Activated T-helper 2 cell treated with anti-CD3 and anti-CD28 coated beads, Interferon-gamma antibody, Interleukin-2, Interleukin-4, amounts not matched to agents 10 μg/mL and 5 μg/mL and 100 μg/mL, durations not matched to agents 14 hours and 24 hours and 36 hours (primary cell): ENCODE measurements at regions of chr11 and their contacts with region 1.

Region 1: GRCh38 chr11:6481012-6481923 is at the starts of genes ARFIP2 and TIMM10B:
- DNase-seq: peak; percentile 97
- H3K4me3 Mint-ChIP-seq: peak within 1 kb of the TSS; percentile 88
- H3K27ac Mint-ChIP-seq: peak within 1 kb of the TSS; percentile 93
- H3K4me1 Mint-ChIP-seq: peaks cover 25% of the 10 kb centered on the region
- H3K27me3 Mint-ChIP-seq: no peaks in the 10 kb centered on the region
- total RNA-seq, gene ARFIP2: 46.8 and 48.6 TPM in 2 replicates
- total RNA-seq, gene TIMM10B: 42.9 and 43.0 TPM in 2 replicates

Region 2: GRCh38 chr11:6505577-6506240 is 24.4 kb after region 1 on chr11:
- intact Hi-C with region 1: loop called (anchors 2 kb)
- DNase-seq: no peak
- H3K4me3 Mint-ChIP-seq: no peak overlapping the region
- H3K27ac Mint-ChIP-seq: no peak overlapping the region
- H3K4me1 Mint-ChIP-seq: peaks cover 3% of the 10 kb centered on the region
- H3K27me3 Mint-ChIP-seq: no peaks in the 10 kb centered on the region

Region 3: DNA sequence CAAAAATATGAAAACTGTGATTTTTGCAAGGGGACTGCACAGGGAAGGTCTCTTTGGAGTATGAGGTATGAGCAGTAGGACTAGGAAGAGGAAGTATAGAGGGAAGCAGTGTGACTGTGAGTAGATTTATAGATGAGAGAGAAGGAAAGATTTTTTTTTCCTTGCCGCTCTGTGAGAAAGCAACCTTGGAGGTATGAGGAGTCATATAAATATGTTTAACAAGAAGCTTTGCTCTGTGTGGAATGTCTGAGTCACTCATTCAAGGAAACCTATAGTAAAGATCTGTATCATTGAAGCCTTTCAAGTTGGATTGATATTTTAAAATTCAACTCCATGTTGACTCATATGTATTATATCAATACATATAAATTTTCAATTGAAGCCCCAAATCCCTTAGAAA is 42.0 kb after region 1 on chr11:
- intact Hi-C with region 1: loop called (anchors 5 kb)
- DNase-seq: no peak
- H3K4me3 Mint-ChIP-seq: no peak overlapping the region
- H3K27ac Mint-ChIP-seq: peak overlapping the region; percentile 52
- H3K4me1 Mint-ChIP-seq: peaks cover 40% of the 10 kb centered on the region
- H3K27me3 Mint-ChIP-seq: no peaks in the 10 kb centered on the region

Region 4: GRCh38 chr11:6544921-6545850 is 63.9 kb after region 1 on chr11:
- intact Hi-C with region 1: no loop called
- DNase-seq: no peak
- H3K4me3 Mint-ChIP-seq: no peak overlapping the region
- H3K27ac Mint-ChIP-seq: no peak overlapping the region
- H3K4me1 Mint-ChIP-seq: peaks cover 12% of the 10 kb centered on the region
- H3K27me3 Mint-ChIP-seq: no peaks in the 10 kb centered on the region

Region 5: GRCh38 chr11:6568191-6568918 is 87.1 kb after region 1 on chr11:
- intact Hi-C with region 1: no loop called
- DNase-seq: no peak
- H3K4me3 Mint-ChIP-seq: no peak overlapping the region
- H3K27ac Mint-ChIP-seq: no peak overlapping the region
- H3K4me1 Mint-ChIP-seq: no peaks in the 10 kb centered on the region
- H3K27me3 Mint-ChIP-seq: no peaks in the 10 kb centered on the region